ENCODE measurements at regions of chr5 and their contacts with region 1.

Region 1: DNA sequence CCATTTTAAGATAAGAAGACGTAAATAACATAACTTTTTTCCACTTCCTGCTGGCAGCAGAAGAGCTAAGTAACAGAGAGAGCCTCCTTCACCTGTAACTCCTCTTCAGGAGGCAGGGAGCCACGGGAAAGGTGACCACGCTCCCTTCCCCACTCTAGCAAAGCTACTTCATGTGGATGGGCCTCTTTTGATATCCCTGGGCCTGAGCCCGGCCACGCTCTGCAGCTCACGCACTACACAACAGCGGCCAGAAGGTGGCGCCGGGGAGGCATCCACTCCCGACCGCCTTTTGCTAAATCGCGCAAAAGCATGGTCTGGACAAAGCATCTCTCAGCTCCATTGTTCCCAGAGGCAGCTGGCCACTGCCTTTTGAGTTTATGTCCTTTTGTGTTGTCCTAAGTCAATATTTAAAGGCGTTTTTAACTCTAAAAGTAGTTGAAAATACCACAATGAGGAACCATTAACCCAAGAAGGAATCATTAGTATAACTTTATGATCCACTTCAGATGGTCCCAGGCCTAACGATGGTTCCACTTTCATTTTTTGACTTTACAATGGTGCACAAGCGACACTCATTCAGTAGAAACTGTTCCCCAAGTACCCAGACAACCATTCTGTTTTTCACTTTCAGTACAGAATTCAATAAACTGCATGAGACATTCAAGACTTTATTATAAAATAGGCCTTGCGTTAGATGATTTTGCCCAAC is 23.6 kb downstream of the CMBL start:
- DNase-seq: peak; percentile 88
- ATAC-seq: peak; percentile 84 to 91

Region 2: GRCh38 chr5:10118150-10118549 is 165.9 kb before region 1 on chr5:
- intact Hi-C with region 1: no loop called
- DNase-seq: no peak
- ATAC-seq: no peak

Region 3: GRCh38 chr5:10424124-10424731 is 140.1 kb after region 1 on chr5:
- intact Hi-C with region 1: loop called (anchors 5 to 10 kb)
- DNase-seq: no peak
- ATAC-seq: peak; percentile 67 to 71

Region 4: GRCh38 chr5:10632110-10632761 is 348.2 kb after region 1 on chr5:
- intact Hi-C with region 1: loop called in 1 of 2 experiments (anchors 5 kb)
- DNase-seq: no peak
- ATAC-seq: no peak